H1 (cell line): ENCODE measurements at regions of chr11 and their contacts with region 1.

Region 1: DNA sequence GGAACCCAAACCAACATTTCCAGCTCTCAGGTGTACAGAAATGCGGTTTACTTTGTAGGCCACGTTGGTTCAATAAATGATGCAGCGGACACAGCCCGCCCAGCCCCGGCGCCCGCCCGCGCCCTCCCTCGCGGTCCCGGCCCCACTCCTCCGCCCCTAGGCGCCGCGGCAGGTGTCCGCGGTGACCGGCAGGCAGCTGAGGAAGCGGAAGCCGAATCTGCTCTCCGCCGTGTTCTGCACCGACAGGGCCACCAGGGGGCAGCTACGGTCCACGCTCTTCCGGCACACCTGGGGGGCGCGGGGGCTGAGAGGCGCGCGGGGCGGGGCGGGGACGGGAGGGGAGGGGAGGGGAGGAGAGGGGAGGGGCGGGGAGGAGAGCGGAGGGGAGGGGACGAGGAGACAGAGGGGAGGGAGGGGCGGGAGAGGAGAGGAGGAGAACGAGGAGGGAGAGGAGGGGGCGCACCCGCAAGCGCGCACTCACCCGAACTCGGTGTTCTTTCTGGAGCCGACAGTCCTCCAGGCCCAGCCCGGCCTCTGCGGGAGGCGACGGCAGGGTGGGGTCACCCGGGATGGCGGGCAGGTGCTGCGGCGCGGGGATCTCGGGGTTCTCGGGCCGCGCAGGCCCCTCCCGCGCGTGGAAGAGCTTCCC is 5.6 kb downstream of the LMNTD2 start:
- DNase-seq: peak; percentile 62 to 91
- H3K4me3 ChIP-seq: peak overlapping the region; percentile 42 to 83 (median 56)
- H3K27ac ChIP-seq: no peak overlapping the region
- H3K4me1 ChIP-seq: peaks cover 0 to 27% (median 7%) of the 10 kb centered on the region in 4 experiments; a peak in 5 of 7 replicates
- H3K27me3 ChIP-seq: peaks cover 13 to 29% (median 26%) of the 10 kb centered on the region in 4 experiments
- CTCF ChIP-seq: peak in 2 of 3 experiments; percentile 68 to 82; a peak in 3 of 4 replicates
- EP300 ChIP-seq: no peak
- POLR2A ChIP-seq: no peak
- RAD21 ChIP-seq: peak; percentile 77 to 79

Region 2: GRCh38 chr11:568306-569157 is 13.6 kb after region 1 on chr11:
- CTCF ChIA-PET with region 1: interaction called, 21 read pairs
- POLR2A ChIA-PET with region 1: interaction called, 13 read pairs
- DNase-seq: peak; percentile 67 to 95
- H3K4me3 ChIP-seq: peak overlapping the region; percentile 43 to 67 (median 52)
- H3K27ac ChIP-seq: no peak overlapping the region
- H3K4me1 ChIP-seq: peaks cover 2 to 22% (median 11%) of the 10 kb centered on the region in 4 experiments; a peak in 6 of 7 replicates
- H3K27me3 ChIP-seq: peaks cover 0 to 3% (median 1%) of the 10 kb centered on the region in 4 experiments; a peak in 3 of 7 replicates
- CTCF ChIP-seq: no peak
- EP300 ChIP-seq: peak in 1 of 2 experiments; percentile 93; a peak in 1 of 3 replicates
- POLR2A ChIP-seq: no peak
- RAD21 ChIP-seq: no peak

Region 3: DNA sequence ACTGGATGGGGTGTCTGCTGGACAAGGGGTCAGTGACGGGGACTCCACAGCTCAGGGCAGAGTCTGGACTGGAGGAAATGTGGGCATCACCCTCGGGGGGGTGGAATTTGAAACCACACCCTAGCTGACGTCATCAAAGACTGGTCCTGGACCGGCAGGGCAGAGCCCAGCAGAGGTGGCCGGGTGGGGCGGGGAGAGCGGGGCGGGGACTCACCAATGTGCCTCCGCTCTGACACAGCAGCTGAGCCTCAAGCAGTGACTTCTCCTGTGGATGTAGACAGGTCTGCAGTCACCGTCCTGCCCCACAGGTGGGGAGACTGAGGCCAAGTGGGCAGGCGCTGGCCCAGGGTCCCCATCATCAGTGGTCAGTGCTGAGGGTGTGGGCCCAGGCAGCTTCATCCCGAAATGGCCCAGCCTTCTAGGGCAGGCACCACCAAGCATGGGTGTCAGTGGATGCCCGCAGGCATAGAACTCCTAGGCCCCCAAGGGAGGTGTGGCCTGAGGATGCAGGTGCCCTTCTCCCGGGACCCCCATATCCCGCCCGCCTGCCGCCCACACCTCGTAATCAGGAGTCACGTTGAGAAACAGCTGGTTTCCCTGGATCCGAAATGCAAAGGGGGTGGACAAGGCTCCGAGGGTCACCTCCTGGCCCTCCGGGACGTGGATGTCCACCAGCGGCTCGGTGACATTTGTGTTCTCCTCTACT is 69.2 kb after region 1 on chr11:
- CTCF ChIA-PET with region 1: no interaction called
- POLR2A ChIA-PET with region 1: no interaction called
- DNase-seq: no peak
- H3K4me3 ChIP-seq: no peak overlapping the region
- H3K27ac ChIP-seq: no peak overlapping the region
- H3K4me1 ChIP-seq: peaks cover 0 to 6% (median under 1%) of the 10 kb centered on the region in 4 experiments; a peak in 2 of 7 replicates
- H3K27me3 ChIP-seq: peaks cover 3 to 14% (median 10%) of the 10 kb centered on the region in 4 experiments; a peak in 6 of 7 replicates
- CTCF ChIP-seq: no peak
- EP300 ChIP-seq: no peak
- POLR2A ChIP-seq: no peak
- RAD21 ChIP-seq: no peak

Region 4: GRCh38 chr11:719214-720016 is 164.5 kb after region 1 on chr11:
- CTCF ChIA-PET with region 1: no interaction called
- POLR2A ChIA-PET with region 1: no interaction called
- DNase-seq: no peak
- H3K4me3 ChIP-seq: no peak overlapping the region
- H3K27ac ChIP-seq: no peak overlapping the region
- H3K4me1 ChIP-seq: peaks cover 0 to 7% (median 5%) of the 10 kb centered on the region in 4 experiments; a peak in 5 of 7 replicates
- H3K27me3 ChIP-seq: peaks cover 0 to 8% (median 8%) of the 10 kb centered on the region in 4 experiments; a peak in 4 of 7 replicates
- CTCF ChIP-seq: no peak
- EP300 ChIP-seq: no peak
- POLR2A ChIP-seq: no peak
- RAD21 ChIP-seq: no peak